ENCODE measurements at regions of chr5 and their contacts with region 1.

Region 1: DNA sequence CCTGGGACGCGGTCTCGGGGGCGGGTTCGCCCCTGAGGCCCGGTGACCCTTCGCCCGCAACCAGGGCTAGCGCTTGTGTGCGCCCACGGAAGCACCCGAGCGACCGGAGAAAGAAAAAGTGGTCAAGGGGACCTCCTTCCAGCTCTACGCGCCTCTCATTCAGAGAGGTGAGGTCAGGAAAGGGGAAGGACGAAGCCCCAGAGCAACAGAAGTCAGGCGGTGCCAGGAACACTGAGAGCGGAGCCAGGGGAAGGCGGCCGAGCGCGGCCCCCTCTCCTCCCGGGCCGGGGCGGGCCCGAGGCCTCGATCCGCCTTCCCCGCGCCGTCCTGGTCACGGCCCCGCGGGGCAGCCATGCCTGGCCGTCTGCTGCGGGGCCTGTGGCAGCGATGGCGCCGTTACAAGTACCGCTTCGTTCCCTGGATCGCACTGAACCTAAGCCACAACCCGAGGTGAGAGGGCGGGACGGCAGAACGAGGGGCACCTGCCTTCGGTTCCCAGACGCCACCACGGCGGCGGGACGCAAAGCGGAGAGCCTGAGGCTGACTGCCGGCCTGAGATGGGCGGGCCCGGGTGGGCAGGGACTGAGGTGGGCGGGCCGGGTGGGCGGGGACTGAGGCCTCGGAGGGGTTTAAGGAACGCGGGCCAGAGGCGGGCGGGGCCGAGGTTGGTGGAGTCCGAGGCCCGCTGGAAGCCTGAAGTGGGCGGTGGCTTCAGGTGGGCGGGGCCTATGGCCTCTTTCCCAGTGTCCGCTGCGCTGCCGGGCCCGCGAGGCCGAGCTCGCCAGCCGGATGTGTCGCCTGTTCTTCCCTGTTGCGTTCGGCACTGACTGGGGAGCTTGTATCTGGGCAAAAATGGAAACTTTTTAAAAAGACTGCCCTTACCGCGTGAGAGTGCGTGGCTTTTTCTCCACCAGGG is at the start of gene SETD9:
- DNase-seq: peak; percentile 100
- ATAC-seq: peak; percentile 96
- total RNA-seq, gene SETD9: 17.4 TPM

Region 2: DNA sequence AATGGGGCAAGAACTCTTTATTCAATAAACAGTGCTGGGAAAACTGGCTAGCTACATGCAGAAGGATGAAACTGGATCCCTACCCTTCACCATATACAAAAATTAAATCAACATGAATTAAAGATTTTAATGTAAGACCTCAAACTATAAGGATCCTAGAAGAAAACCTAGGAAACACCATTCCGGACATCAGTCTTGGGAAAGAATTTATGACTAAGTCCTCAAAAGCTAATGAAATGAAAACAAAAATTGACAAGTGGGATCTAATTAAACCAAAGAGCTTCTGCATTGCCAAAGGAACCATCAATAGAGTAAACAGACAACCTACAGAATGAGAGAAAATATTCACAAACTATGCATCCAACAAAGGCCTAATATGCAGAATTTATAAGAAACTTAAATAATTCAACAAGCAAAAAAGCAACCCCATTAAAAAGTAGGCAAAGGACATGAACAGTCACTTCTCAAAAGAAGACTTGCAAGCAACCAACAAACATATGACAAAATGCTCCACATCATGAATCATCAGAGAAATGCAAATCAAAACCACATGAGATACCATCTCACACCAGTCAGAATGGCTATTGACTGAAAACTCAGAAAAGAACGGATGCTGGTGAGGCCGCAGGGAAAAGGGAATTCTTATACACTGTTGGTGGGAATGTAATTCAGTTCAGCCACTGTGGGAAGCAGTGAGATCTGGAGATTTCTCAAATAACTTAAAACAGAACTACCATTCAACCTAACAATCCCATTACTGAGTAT is 198.5 kb before region 1 on chr5:
- intact Hi-C with region 1: no loop called
- DNase-seq: no peak
- ATAC-seq: no peak

Region 3: DNA sequence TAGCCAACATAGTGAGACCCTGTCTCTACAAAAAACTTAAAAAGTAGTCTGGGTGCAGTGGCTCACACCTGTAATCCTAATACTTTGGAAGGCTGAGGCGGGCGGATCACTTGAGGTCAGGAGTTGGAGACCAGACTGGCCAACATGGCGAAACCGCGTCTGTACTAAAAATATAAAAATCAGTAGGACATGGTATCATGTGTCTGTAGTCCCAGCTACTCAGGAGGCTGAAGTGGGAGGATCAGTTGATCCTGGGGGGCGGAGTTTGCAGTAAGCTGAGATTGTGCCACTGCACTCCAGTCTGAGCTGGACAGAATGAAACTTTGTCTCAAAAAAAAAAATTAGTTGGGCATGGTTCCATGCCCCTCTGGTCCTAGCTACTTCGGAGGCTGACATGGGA is 100.3 kb after region 1 on chr5:
- intact Hi-C with region 1: no loop called
- DNase-seq: no peak
- ATAC-seq: no peak

Region 4: DNA sequence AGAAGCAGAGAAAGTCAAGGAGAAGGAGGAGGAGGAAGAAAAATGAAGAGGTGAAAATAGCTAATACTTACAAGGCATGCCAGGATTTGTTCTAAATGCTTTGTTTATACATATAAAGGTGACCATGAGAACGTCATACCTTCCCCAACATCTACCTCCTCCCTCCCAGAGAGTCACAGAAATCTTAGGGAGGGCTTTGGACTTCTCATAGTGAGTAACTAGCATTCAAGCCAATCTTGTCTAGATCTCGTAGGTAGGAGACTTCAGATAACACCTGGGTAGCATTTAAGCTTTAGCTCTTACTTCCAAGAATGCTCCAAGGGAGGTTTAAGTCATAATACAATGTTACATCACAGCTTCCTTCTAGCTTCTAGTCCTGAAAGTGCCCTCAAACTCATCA is 227.8 kb after region 1 on chr5:
- intact Hi-C with region 1: loop called (anchors 10 kb)
- DNase-seq: no peak
- ATAC-seq: no peak

Measured in Right ventricle myocardium superior (tissue), 1 donor.